Gastrocnemius medialis (tissue), 4 donors: ENCODE measurements at regions of chr10 and their contacts with region 1.

Region 1: DNA sequence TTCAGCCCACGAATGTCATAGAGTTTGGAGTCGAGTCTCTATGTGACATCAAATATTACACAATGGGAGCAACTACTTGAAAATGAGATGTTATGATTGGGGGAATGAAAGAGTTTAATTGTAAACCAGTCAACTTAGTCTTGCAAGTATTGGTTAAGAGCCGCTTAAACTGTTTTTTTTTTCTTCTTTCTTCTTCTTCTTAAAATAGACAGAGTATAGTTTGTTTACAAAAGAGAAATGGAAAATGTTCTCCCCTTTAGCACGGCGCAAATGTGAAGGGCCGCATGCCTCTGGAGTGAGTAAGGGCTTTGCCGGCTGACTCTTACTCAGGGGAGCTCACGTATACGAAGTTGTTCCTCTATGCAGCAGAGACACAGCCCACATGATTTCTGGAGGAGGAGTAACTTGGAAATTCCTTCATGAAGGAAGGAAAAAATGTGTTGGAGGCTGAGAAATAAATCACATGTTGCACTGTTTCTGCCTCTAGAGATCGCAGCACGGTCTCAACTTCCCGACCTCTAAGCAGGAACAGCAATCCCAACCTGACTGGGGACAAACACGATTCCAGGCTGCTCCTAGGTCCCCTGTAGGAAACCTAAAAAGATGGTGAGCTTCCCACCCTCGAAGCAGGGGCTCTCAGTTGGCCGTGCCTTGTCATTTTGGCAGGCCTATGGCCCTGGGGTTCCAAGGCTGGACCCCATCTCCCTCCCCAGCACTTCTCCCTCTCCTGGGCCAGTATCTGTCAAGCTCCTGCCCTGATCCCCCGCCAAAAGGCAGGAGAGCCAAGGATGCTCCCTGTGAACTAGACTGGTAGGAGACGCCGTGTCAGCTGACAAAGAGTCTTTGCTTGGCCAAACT is 44.8 kb downstream of the MYOF start:
- DNase-seq: peak; percentile 84 to 87
- ATAC-seq: peak; percentile 95 to 97
- H3K4me3 ChIP-seq: peak overlapping the region; percentile 12 to 46 (median 35)
- H3K27ac ChIP-seq: peak overlapping the region; percentile 83 to 94 (median 92)
- H3K4me1 ChIP-seq: peaks cover 29 to 43% of the 10 kb centered on the region in 2 donors
- H3K27me3 ChIP-seq: no peaks in the 10 kb centered on the region
- CTCF ChIP-seq: no peak
- POLR2A ChIP-seq: peak in 1 of 2 donors; percentile 32

Region 2: DNA sequence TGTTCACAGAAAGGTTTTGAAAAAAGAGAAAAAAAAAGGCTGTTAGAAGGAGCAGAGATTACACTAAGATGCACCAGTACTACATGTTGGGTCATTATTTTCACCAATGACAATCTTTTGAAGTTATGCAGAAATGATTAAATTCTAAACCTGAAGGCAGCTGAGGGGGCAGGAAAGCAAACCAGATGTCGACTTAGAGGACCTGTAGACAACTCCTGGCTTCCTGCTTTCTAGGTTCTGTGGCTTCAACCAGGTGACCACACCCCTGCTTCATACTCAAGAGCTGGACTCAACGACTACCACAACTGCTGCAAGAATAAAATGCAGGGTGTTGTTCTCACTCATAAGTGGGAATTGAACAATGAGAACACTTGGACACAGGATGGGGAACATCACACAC is 14.8 kb after region 1 on chr10:
- in situ Hi-C with region 1: no loop called
- intact Hi-C with region 1: no loop called
- DNase-seq: no peak
- ATAC-seq: no peak
- H3K4me3 ChIP-seq: no peak overlapping the region
- H3K27ac ChIP-seq: no peak overlapping the region
- H3K4me1 ChIP-seq: no peaks in the 10 kb centered on the region
- H3K27me3 ChIP-seq: no peaks in the 10 kb centered on the region
- CTCF ChIP-seq: no peak
- POLR2A ChIP-seq: no peak

Region 3: DNA sequence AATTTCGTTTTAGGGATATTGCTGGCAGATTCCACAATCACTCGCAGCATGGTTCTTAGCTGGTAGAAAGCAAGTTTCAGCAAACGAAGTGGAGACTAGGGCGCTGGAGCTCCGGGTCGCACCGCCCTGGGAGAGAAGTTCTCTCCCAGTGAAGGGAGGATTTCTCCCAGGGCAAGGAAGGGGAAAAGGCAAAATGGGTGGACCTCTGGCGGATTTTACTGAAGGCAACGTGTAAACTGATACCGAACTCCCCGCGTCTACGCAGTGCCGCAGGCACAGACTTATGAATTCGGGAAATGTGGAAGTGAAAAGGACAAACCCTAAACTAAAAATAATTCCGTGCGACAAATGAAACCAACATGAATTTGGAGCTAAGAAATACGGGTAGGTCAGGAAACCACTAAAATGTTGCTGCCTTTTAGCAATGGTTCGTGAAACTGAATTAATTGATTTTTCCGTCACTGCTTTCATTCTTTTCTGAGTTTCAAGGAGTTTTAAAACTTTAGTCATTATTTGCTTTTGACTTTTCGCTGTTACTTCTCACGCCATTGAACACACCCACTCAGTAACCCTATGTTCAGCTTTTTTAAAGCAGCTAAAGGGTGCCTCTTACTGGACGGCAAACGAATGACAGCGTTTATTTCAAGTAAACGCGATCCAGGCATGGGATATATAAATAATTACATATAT is 45.0 kb after region 1 on chr10 and contains the start of gene MYOF:
- in situ Hi-C with region 1: no loop called
- intact Hi-C with region 1: loop called (anchors 5 kb)
- DNase-seq: peak in 1 of 2 donors; percentile 28
- ATAC-seq: peak; percentile 90
- H3K4me3 ChIP-seq: peak within 1 kb of the TSS; percentile 63 to 92 (median 65)
- H3K27ac ChIP-seq: peak within 1 kb of the TSS; percentile 64 to 80 (median 72)
- H3K4me1 ChIP-seq: peaks cover 0 to 9% of the 10 kb centered on the region in 2 donors
- H3K27me3 ChIP-seq: peaks cover 0 to 14% (median 0%) of the 10 kb centered on the region in 3 donors
- CTCF ChIP-seq: peak in 4 of 5 experiments; percentile 27 to 64 (median 53)
- POLR2A ChIP-seq: peak; percentile 28 to 60
- total RNA-seq, gene MYOF: 4.1 to 10.3 (median 6.3) TPM